Activated CD4-positive, alpha-beta T cell treated with anti-CD3 and anti-CD28 coated beads, Interleukin-2, amount 10 ng/mL, durations not matched to agents 24 days and 14 days (primary cell): ENCODE measurements at regions of chr18 and their contacts with region 1.

Region 1: GRCh38 chr18:57586251-57587049 is at the start of gene FECH:
- DNase-seq: peak; percentile 94
- H3K4me3 Mint-ChIP-seq: peak within 1 kb of the TSS; percentile 85
- H3K27ac Mint-ChIP-seq: peak within 1 kb of the TSS; percentile 80
- H3K4me1 Mint-ChIP-seq: peaks cover 17% of the 10 kb centered on the region
- H3K27me3 Mint-ChIP-seq: no peaks in the 10 kb centered on the region
- total RNA-seq, gene FECH: 22.4 and 25.1 TPM in 2 replicates

Region 2: GRCh38 chr18:56638271-56639093 is 948.0 kb before region 1 on chr18 and contains the start of gene TXNL1:
- intact Hi-C with region 1: loop called (anchors 10 kb)
- DNase-seq: peak; percentile 100
- H3K4me3 Mint-ChIP-seq: peak within 1 kb of the TSS; percentile 98
- H3K27ac Mint-ChIP-seq: peak within 1 kb of the TSS; percentile 96
- H3K4me1 Mint-ChIP-seq: peaks cover 36% of the 10 kb centered on the region
- H3K27me3 Mint-ChIP-seq: no peaks in the 10 kb centered on the region
- total RNA-seq, gene TXNL1: 102 and 104 TPM in 2 replicates